ENCODE measurements at regions of chr2 and their contacts with region 1.

Region 1: DNA sequence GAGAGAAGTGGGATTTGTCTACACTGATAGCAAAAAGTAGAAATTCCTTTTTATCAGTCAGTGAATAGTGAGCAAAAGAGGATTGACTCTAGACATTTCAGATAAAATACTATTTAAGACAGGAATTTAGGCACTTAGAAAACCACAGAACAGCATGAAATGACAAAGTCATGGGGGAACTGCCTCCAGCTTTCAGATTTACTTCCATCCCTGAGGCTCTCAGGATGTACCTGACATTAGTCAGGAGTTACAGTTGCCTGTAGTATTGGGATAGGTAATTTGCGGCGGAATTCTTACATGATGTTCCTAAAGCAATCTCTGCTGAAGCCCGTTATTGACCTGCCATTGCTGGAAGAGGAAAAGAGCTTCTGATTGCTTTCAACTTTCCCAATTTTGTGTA is 337.1 kb upstream of the MAP2 start:
- DNase-seq: no peak
- ATAC-seq: no peak
- H3K4me3 ChIP-seq: no peak overlapping the region
- H3K27ac ChIP-seq: no peak overlapping the region
- H3K4me1 ChIP-seq: no peaks in the 10 kb centered on the region
- H3K27me3 ChIP-seq: no peaks in the 10 kb centered on the region
- CTCF ChIP-seq: no peak
- EP300 ChIP-seq: no peak
- POLR2A ChIP-seq: no peak
- RAD21 ChIP-seq: no peak

Region 2: DNA sequence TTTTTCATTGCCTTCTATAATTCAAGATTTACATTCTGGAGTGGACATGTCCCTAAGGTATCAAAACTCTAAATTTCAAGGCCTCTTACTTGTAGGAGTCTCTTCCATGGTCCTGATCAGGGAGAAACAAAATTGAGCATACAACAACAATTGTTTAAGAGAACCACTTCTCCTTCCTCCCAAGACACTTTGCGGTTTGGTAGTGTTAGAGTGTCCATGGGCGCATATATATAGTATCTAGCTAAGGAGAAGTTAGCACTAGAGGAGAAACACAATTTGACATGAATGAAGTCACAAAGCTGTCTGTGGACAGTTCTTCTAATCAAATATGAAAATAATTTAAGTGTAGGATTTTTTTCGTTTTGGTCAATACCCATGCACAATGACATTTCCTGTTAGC is 12.1 kb before region 1 on chr2:
- CTCF ChIA-PET with region 1: no interaction called
- POLR2A ChIA-PET with region 1: no interaction called
- in situ Hi-C with region 1: no loop called
- intact Hi-C with region 1: loop called (anchors 1 kb)
- DNase-seq: no peak
- ATAC-seq: no peak
- H3K4me3 ChIP-seq: no peak overlapping the region
- H3K27ac ChIP-seq: no peak overlapping the region
- H3K4me1 ChIP-seq: no peaks in the 10 kb centered on the region
- H3K27me3 ChIP-seq: no peaks in the 10 kb centered on the region
- CTCF ChIP-seq: no peak
- EP300 ChIP-seq: no peak
- POLR2A ChIP-seq: no peak
- RAD21 ChIP-seq: no peak

Measured in HepG2 (cell line).